Activated CD8-positive, alpha-beta T cell treated with anti-CD3 and anti-CD28 coated beads for 36 hours (primary cell): ENCODE measurements at regions of chr1 and their contacts with region 1.

Region 1: GRCh38 chr1:202315576-202316168 is 26.1 kb downstream of the UBE2T start:
- DNase-seq: peak; percentile 87
- ATAC-seq: peak; percentile 88
- H3K4me3 Mint-ChIP-seq: no peak overlapping the region
- H3K27ac Mint-ChIP-seq: no peak overlapping the region
- H3K4me1 Mint-ChIP-seq: peaks cover 7% of the 10 kb centered on the region
- H3K27me3 Mint-ChIP-seq: peaks cover 1% of the 10 kb centered on the region
- CTCF ChIP-seq: peak; percentile 85

Region 2: GRCh38 chr1:202135221-202135721 is 180.4 kb before region 1 on chr1:
- CTCF ChIA-PET with region 1: no interaction called
- POLR2A ChIA-PET with region 1: no interaction called
- intact Hi-C with region 1: no loop called
- DNase-seq: peak; percentile 60
- ATAC-seq: peak; percentile 96
- H3K4me3 Mint-ChIP-seq: no peak overlapping the region
- H3K27ac Mint-ChIP-seq: no peak overlapping the region
- H3K4me1 Mint-ChIP-seq: no peaks in the 10 kb centered on the region
- H3K27me3 Mint-ChIP-seq: no peaks in the 10 kb centered on the region
- CTCF ChIP-seq: peak; percentile 90

Region 3: GRCh38 chr1:202192770-202193613 is 122.7 kb before region 1 on chr1:
- CTCF ChIA-PET with region 1: interaction called, 36 read pairs
- POLR2A ChIA-PET with region 1: no interaction called
- intact Hi-C with region 1: loop called (anchors 2 kb)
- DNase-seq: peak; percentile 75
- ATAC-seq: peak; percentile 72
- H3K4me3 Mint-ChIP-seq: no peak overlapping the region
- H3K27ac Mint-ChIP-seq: no peak overlapping the region
- H3K4me1 Mint-ChIP-seq: peaks cover 7% of the 10 kb centered on the region
- H3K27me3 Mint-ChIP-seq: peaks cover 14% of the 10 kb centered on the region
- CTCF ChIP-seq: peak; percentile 85

Region 4: DNA sequence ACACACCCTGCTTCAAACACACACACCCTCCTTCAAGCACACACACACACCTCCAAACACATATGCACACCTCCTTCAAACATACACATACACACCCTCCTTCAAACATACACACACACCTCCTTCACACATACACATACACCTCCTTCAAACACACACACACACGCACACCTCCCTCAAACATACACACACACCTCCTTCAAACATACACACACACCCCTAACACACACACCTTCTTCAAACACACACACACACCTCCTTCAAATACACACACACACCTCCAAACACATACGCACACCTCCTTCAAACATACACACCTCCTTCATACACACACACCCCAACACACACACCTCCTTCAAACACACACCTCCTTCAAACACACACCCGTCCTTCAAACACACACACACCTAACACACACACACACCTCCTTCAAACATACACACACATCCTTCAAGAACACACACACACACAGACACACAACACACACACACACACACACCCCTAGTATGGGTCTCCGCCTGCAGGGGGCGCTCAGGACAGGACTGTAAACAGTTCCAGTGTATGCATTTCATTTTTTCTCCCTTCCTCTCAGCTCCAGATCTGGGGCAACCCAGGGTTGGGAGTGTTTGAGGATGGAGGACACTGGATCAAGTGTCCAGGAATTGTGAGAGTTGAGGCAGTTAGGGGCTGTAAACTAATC is 110.0 kb before region 1 on chr1:
- CTCF ChIA-PET with region 1: no interaction called
- POLR2A ChIA-PET with region 1: no interaction called
- intact Hi-C with region 1: no loop called
- DNase-seq: no peak
- ATAC-seq: no peak
- H3K4me3 Mint-ChIP-seq: no peak overlapping the region
- H3K27ac Mint-ChIP-seq: no peak overlapping the region
- H3K4me1 Mint-ChIP-seq: peaks cover 2% of the 10 kb centered on the region
- H3K27me3 Mint-ChIP-seq: peaks cover under 1% of the 10 kb centered on the region
- CTCF ChIP-seq: peak; percentile 46

Region 5: GRCh38 chr1:202221911-202222909 is 93.5 kb before region 1 on chr1:
- CTCF ChIA-PET with region 1: interaction called, 10 read pairs
- POLR2A ChIA-PET with region 1: no interaction called
- intact Hi-C with region 1: no loop called
- DNase-seq: no peak
- ATAC-seq: peak; percentile 30
- H3K4me3 Mint-ChIP-seq: no peak overlapping the region
- H3K27ac Mint-ChIP-seq: no peak overlapping the region
- H3K4me1 Mint-ChIP-seq: peaks cover 5% of the 10 kb centered on the region
- H3K27me3 Mint-ChIP-seq: no peaks in the 10 kb centered on the region
- CTCF ChIP-seq: no peak

Region 6: DNA sequence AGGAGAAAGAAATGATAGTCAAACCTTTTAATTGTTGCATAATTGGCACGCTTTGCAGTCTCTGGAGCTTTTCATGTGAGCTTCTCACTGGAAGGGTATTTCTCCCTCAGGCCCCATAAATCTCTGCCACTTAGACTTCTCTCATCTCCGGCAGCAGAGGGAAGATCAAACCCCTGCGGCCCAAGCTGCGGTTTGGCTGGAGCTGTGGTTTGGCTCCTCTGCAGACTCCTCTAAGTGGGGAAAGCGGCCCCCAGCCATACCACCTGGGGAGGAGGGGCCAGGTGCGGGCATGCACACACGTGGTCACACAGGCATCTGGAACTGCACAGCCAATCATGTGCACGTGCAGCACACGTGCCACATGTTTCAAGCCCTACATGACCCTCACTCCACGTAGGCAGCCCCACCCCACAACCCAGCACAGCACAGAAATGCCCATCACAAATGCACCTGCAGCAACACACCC is 32.3 kb before region 1 on chr1:
- CTCF ChIA-PET with region 1: interaction called, 12 read pairs
- POLR2A ChIA-PET with region 1: no interaction called
- intact Hi-C with region 1: no loop called
- DNase-seq: peak; percentile 43
- ATAC-seq: peak; percentile 39
- H3K4me3 Mint-ChIP-seq: no peak overlapping the region
- H3K27ac Mint-ChIP-seq: no peak overlapping the region
- H3K4me1 Mint-ChIP-seq: peaks cover 13% of the 10 kb centered on the region
- H3K27me3 Mint-ChIP-seq: peaks cover 4% of the 10 kb centered on the region
- CTCF ChIP-seq: no peak

Region 7: DNA sequence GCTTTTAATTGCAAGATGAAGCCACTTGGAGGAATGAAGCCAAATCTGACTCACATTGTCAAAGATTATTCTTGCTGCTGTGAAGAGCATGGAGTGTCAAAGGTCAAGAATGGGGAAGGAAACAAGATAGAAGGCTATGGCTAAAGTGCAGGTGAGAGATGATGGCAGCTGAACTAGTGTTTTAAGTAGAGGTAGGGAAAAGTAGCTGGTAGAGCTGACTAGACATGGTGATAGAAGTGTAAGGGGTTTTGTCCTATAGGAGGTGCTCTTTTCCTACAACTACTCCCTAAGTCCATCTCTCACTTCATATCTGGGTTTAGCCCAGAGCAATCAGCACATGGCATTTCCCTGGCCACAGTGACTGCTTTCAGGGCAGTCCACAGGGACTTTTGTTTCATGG is 14.2 kb after region 1 on chr1:
- CTCF ChIA-PET with region 1: interaction called, 13 read pairs
- POLR2A ChIA-PET with region 1: no interaction called
- intact Hi-C with region 1: no loop called
- DNase-seq: no peak
- ATAC-seq: no peak
- H3K4me3 Mint-ChIP-seq: no peak overlapping the region
- H3K27ac Mint-ChIP-seq: no peak overlapping the region
- H3K4me1 Mint-ChIP-seq: no peaks in the 10 kb centered on the region
- H3K27me3 Mint-ChIP-seq: no peaks in the 10 kb centered on the region
- CTCF ChIP-seq: no peak

Region 8: GRCh38 chr1:202397256-202397655 is 81.6 kb after region 1 on chr1:
- CTCF ChIA-PET with region 1: no interaction called
- POLR2A ChIA-PET with region 1: no interaction called
- intact Hi-C with region 1: no loop called
- DNase-seq: no peak
- ATAC-seq: no peak
- H3K4me3 Mint-ChIP-seq: no peak overlapping the region
- H3K27ac Mint-ChIP-seq: no peak overlapping the region
- H3K4me1 Mint-ChIP-seq: peaks cover 18% of the 10 kb centered on the region
- H3K27me3 Mint-ChIP-seq: no peaks in the 10 kb centered on the region
- CTCF ChIP-seq: no peak

Region 9: GRCh38 chr1:202416641-202417040 is 101.0 kb after region 1 on chr1:
- CTCF ChIA-PET with region 1: no interaction called
- POLR2A ChIA-PET with region 1: no interaction called
- intact Hi-C with region 1: no loop called
- DNase-seq: no peak
- ATAC-seq: no peak
- H3K4me3 Mint-ChIP-seq: no peak overlapping the region
- H3K27ac Mint-ChIP-seq: no peak overlapping the region
- H3K4me1 Mint-ChIP-seq: no peaks in the 10 kb centered on the region
- H3K27me3 Mint-ChIP-seq: no peaks in the 10 kb centered on the region
- CTCF ChIP-seq: no peak